ENCODE measurements at regions of chr2 and their contacts with region 1.

Region 1: GRCh38 chr2:37324786-37325624 is at the start of gene PRKD3:
- DNase-seq: peak; percentile 40 to 79 (median 62)
- H3K4me3 ChIP-seq: peak within 1 kb of the TSS; percentile 80 to 94 (median 92)
- H3K27ac ChIP-seq: peak within 1 kb of the TSS; percentile 58 to 83
- H3K4me1 ChIP-seq: peaks cover 8 to 39% (median 28%) of the 10 kb centered on the region in 4 experiments
- H3K27me3 ChIP-seq: no peaks in the 10 kb centered on the region

Region 2: DNA sequence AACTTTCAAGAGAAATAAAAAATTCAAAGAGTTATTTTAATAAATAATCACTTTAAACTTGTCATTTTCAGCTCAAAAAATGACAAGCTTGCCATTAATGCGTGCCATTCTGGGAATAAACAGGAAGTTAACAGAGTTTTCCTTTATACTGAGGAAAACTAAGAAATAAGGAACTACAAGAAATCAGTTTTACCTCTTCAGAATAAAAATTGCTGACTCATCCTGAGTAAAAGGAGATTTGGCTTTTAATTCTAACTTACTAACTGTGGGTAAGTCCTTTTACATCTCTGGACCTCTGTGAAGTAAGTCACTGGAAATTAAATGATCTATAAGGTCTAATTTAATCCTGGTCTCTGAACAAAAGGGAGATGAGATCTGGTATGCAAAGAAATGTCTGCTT is 109.8 kb before region 1 on chr2:
- CTCF ChIA-PET with region 1: no interaction called
- POLR2A ChIA-PET with region 1: no interaction called
- DNase-seq: peak in 2 of 3 donors; percentile 59 to 62
- H3K4me3 ChIP-seq: no peak overlapping the region
- H3K27ac ChIP-seq: no peak overlapping the region
- H3K4me1 ChIP-seq: peaks cover 0 to 9% (median 0%) of the 10 kb centered on the region in 4 experiments
- H3K27me3 ChIP-seq: no peaks in the 10 kb centered on the region

Region 3: GRCh38 chr2:37344453-37345361 is 19.7 kb after region 1 on chr2 and contains the start of gene QPCT:
- CTCF ChIA-PET with region 1: interaction called, 12 read pairs
- POLR2A ChIA-PET with region 1: interaction called, 10 read pairs
- DNase-seq: peak; percentile 61 to 89 (median 78)
- H3K4me3 ChIP-seq: peak within 1 kb of the TSS; percentile 48 to 91 (median 71)
- H3K27ac ChIP-seq: no peak within 1 kb of the TSS
- H3K4me1 ChIP-seq: peaks cover 6 to 38% (median 22%) of the 10 kb centered on the region in 4 experiments
- H3K27me3 ChIP-seq: no peaks in the 10 kb centered on the region

Region 4: GRCh38 chr2:37350034-37350433 is 25.0 kb after region 1 on chr2:
- CTCF ChIA-PET with region 1: interaction called, 12 read pairs
- POLR2A ChIA-PET with region 1: interaction called, 3 read pairs
- DNase-seq: peak in 2 of 3 donors; percentile 69 to 76
- H3K4me3 ChIP-seq: no peak overlapping the region
- H3K27ac ChIP-seq: no peak overlapping the region
- H3K4me1 ChIP-seq: peaks cover 4 to 22% (median 16%) of the 10 kb centered on the region in 4 experiments
- H3K27me3 ChIP-seq: no peaks in the 10 kb centered on the region

Measured in common myeloid progenitor, CD34-positive (primary cell).